ENCODE measurements at regions of chr2 and their contacts with region 1.

Region 1: DNA sequence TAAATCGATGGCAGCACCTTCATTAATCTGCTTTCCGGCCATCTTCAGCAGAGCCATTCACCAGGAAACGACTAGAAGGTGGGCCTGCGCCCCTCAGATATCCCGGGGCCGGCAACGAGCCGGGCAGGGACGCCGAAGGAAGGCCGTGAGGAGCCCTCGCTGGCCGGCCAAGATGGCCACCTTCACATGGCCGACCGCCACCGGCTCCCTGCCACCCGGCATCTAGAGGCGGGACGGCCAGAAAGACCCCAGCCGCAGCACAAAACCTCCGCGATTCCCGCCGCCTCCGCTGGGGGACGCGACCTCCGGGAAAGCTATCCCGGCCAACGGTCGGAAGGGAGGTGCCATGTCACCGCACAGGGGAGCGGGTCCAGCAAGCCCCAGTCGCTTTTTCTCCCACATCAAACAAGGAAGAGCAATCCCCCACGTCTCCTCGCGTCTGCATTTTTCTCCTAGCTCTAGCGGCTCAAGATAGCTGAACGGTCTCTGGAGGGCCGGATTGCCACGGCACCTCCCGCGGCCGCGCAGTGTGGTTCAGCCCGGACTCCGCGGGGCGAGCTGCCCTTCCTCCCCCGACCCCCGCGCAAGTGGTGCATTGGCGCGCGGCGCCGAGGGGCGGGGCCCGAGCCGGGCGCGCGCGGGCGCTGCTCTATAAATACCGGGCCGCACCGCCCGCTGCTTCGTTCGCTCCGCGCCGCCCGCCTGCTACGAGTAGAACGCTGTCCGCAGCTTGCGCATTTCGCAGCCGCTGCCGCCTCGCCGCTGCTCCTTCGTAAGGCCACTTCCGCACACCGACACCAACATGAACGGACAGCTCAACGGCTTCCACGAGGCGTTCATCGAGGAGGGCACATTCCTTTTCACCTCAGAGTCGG is at the start of gene MAT2A:
- DNase-seq: no peak
- H3K4me3 ChIP-seq: peak within 1 kb of the TSS; percentile 98
- H3K27me3 ChIP-seq: no peaks in the 10 kb centered on the region
- CTCF ChIP-seq: peak; percentile 83
- polyA plus RNA-seq, gene MAT2A: 261 and 302 TPM in 2 replicates

Region 2: DNA sequence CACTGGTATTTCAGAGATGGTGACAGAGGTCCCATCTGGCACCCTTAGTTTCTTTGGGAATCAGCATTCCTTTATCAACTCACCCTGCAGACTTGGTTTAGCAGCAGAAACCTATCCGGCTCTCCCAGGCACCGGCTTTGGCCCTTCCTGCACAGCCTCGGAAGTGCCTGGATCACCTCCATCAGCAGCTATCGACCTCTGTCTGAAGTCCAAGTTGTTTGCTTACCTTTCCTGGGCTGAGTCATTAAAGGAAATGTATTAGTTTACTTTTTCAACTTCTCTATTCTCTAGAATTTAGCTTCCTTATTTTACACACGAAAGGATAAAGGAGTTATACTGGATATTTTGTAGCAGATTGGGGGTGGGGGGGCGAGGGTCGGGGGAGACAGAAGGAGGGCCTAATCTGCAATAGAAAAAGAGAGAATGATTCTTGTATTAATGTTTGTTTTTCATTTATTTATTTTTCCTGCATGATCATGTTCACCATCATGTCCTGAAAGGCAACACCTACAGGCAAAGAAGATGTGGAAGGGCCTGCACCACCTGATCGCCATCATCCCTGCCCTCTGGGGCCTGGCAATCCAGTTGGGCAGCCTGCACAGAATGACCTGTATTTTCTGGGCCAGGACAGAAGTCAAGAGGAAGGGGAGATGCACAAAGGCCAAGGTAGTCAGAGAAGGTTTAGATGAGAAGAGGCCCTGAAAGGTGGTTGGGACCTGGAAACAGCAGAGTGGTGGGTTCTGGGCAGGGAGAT is 21.9 kb before region 1 on chr2:
- CTCF ChIA-PET with region 1: interaction called, 10 read pairs
- POLR2A ChIA-PET with region 1: no interaction called
- DNase-seq: no peak
- H3K4me3 ChIP-seq: no peak overlapping the region
- H3K27me3 ChIP-seq: no peaks in the 10 kb centered on the region
- CTCF ChIP-seq: no peak